Heart right ventricle (tissue), 16 donors: ENCODE measurements at regions of chr3 and their contacts with region 1.

Region 1: GRCh38 chr3:196081791-196082618 is at the start of gene TFRC:
- DNase-seq: peak; percentile 94 to 96
- ATAC-seq: peak; percentile 98 to 99 (median 99)
- H3K4me3 ChIP-seq: peak within 1 kb of the TSS; percentile 86 to 100 (median 94)
- H3K27ac ChIP-seq: peak within 1 kb of the TSS; percentile 76 to 99 (median 96)
- H3K4me1 ChIP-seq: peaks cover 0 to 40% (median 32%) of the 10 kb centered on the region in 9 donors
- H3K27me3 ChIP-seq: no peaks in the 10 kb centered on the region
- CTCF ChIP-seq: peak in 1 of 9 donors; percentile 14
- total RNA-seq, gene TFRC: 58.8 to 300 (median 104) TPM

Region 2: GRCh38 chr3:196192036-196192523 is 110.1 kb after region 1 on chr3:
- intact Hi-C with region 1: loop called in 1 of 10 experiments (anchors 2 kb)
- DNase-seq: no peak
- ATAC-seq: no peak
- H3K4me3 ChIP-seq: no peak overlapping the region
- H3K27ac ChIP-seq: peak overlapping the region in 8 of 10 donors; percentile 62 to 95 (median 83)
- H3K4me1 ChIP-seq: peaks cover 0 to 49% (median 20%) of the 10 kb centered on the region in 9 donors
- H3K27me3 ChIP-seq: no peaks in the 10 kb centered on the region
- CTCF ChIP-seq: no peak

Region 3: GRCh38 chr3:196423044-196423781 is 341.2 kb after region 1 on chr3:
- intact Hi-C with region 1: no loop called
- DNase-seq: peak; percentile 82 to 87
- ATAC-seq: peak; percentile 87 to 98 (median 96)
- H3K4me3 ChIP-seq: no peak overlapping the region
- H3K27ac ChIP-seq: peak overlapping the region in 9 of 10 donors; percentile 38 to 83 (median 69)
- H3K4me1 ChIP-seq: peaks cover 3 to 80% (median 49%) of the 10 kb centered on the region in 9 donors
- H3K27me3 ChIP-seq: no peaks in the 10 kb centered on the region
- CTCF ChIP-seq: peak in 2 of 9 donors; percentile 9 to 17